Transverse colon (tissue), 4 donors: ENCODE measurements at regions of chr9 and their contacts with region 1.

Region 1: DNA sequence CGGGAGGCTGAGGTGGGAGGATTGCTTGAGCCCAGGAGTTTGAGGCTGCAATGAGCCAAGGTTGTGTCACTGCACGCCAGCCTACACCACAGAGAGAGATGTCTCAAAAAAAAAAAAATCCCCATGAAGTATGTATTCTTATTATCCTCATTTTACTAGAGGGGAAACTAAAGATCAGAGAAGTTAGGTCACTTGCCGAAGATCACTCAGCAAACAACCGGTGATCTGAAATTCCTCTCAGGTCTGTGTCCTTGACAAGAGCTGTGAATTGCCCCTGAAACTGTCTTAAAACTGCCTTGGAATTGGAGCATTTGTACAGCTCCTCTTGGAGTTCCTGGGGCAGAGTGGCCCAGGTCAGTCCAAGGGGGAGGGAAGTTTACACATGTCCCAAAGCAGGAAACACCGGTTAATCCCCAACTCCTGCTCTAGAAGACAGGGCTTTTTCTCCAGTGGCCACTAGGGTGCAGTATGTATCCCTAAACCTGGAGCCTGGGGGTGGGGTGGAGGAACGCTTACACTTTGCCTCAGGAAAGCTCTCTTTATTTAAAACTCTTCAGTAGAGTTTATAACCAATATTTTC is 27.6 kb downstream of the AQP7 start:
- DNase-seq: peak; percentile 80
- H3K4me3 ChIP-seq: no peak overlapping the region
- H3K27ac ChIP-seq: peak overlapping the region in 1 of 4 donors; percentile 44
- H3K4me1 ChIP-seq: peaks cover 0 to 9% (median 3%) of the 10 kb centered on the region in 4 donors
- H3K27me3 ChIP-seq: no peaks in the 10 kb centered on the region
- CTCF ChIP-seq: peak; percentile 85 to 91 (median 89)
- EP300 ChIP-seq: no peak
- POLR2A ChIP-seq: no peak

Region 2: GRCh38 chr9:33092634-33093033 is 282.1 kb before region 1 on chr9:
- in situ Hi-C with region 1: no loop called
- intact Hi-C with region 1: no loop called
- DNase-seq: no peak
- H3K4me3 ChIP-seq: no peak overlapping the region
- H3K27ac ChIP-seq: no peak overlapping the region
- H3K4me1 ChIP-seq: no peaks in the 10 kb centered on the region
- H3K27me3 ChIP-seq: no peaks in the 10 kb centered on the region
- CTCF ChIP-seq: no peak
- EP300 ChIP-seq: no peak
- POLR2A ChIP-seq: no peak

Region 3: DNA sequence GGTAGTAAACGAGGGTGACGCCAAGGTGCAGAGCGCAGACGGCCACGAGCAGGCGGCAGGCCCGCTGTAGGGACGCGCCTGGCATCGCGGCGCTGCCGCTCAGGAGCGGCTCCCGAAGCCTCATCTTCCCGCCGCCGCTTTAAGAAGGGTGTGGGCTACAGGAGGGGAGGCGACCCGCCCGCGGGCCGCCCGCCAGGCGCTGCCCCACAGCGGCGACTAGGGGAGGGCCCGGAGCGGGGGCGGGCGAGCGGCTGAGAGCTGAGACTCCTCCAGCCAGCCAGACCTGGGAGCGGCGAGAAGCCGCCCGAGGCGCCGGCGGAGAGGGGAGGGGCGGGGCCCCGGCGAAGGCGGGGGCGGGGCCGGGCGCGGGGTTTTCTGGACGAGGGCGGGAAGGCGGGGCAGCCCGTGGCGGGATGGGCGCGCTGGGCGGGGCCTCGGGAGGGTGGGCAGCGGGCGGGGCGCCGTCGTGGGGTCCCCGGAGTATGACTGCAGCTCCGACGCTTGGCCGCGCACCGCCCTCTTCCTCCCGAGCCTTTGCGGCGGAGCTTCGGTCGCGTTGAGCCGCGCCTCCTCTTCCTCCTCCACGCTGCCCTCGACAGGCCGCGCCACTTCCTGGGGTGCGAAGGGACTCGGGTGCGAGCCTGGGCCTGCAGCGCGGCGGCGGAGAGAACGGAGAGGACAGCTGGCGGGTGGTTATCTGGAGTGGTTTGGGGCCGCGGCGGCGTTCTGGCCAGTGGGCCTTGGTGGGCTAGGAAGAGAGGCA is 207.5 kb before region 1 on chr9 and contains the start of gene B4GALT1:
- in situ Hi-C with region 1: no loop called
- intact Hi-C with region 1: no loop called
- DNase-seq: peak; percentile 97
- H3K4me3 ChIP-seq: peak within 1 kb of the TSS; percentile 38 to 84 (median 72)
- H3K27ac ChIP-seq: peak within 1 kb of the TSS; percentile 93 to 97 (median 96)
- H3K4me1 ChIP-seq: peaks cover 22 to 49% (median 43%) of the 10 kb centered on the region in 4 donors
- H3K27me3 ChIP-seq: no peaks in the 10 kb centered on the region
- CTCF ChIP-seq: peak in 2 of 5 experiments; percentile 22 to 27
- EP300 ChIP-seq: no peak
- POLR2A ChIP-seq: peak; percentile 88
- total RNA-seq, gene B4GALT1: 23.7 to 126 (median 93.7) TPM

Region 4: DNA sequence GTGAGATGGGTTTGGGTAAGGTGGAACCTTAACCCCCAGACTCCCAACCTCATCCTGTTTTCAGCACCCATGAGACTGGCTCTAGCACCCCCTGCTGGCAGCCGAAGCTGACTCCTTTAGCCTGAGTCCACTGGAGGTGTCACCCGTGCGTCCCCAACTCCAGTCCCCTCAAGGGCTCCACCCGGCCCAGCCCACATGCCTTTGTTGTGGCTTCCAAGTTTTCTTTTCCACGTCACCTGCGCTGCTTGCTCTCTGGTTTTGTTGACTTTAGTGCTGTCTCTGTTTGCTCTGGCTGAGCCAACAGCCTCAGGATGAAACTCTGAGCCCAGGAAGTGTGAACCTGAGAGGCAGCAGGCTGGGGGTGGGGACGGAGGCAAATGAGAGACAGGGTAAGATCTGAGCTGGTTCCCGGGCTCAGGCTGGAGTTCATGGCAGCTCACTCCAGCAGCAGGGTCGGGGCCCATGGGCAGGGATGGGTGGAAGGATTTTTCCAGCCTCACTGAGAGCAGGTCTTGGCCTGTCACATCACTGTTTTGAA is 40.8 kb after region 1 on chr9:
- in situ Hi-C with region 1: no loop called
- intact Hi-C with region 1: loop called (anchors 5 kb)
- DNase-seq: peak; percentile 91
- H3K4me3 ChIP-seq: no peak overlapping the region
- H3K27ac ChIP-seq: peak overlapping the region in 3 of 4 donors; percentile 33 to 55 (median 54)
- H3K4me1 ChIP-seq: peaks cover 7 to 38% (median 21%) of the 10 kb centered on the region in 4 donors
- H3K27me3 ChIP-seq: no peaks in the 10 kb centered on the region
- CTCF ChIP-seq: peak; percentile 70 to 86 (median 77)
- EP300 ChIP-seq: no peak
- POLR2A ChIP-seq: no peak

Region 5: GRCh38 chr9:33466565-33467495 is 92.1 kb after region 1 on chr9:
- in situ Hi-C with region 1: loop called in 1 of 4 experiments (anchors 25 kb)
- intact Hi-C with region 1: loop called (anchors 10 kb)
- DNase-seq: peak; percentile 78
- H3K4me3 ChIP-seq: no peak overlapping the region
- H3K27ac ChIP-seq: no peak overlapping the region
- H3K4me1 ChIP-seq: peaks cover 0 to 2% (median 0%) of the 10 kb centered on the region in 4 donors
- H3K27me3 ChIP-seq: no peaks in the 10 kb centered on the region
- CTCF ChIP-seq: peak; percentile 95 to 98 (median 97)
- EP300 ChIP-seq: no peak
- POLR2A ChIP-seq: no peak

Region 6: DNA sequence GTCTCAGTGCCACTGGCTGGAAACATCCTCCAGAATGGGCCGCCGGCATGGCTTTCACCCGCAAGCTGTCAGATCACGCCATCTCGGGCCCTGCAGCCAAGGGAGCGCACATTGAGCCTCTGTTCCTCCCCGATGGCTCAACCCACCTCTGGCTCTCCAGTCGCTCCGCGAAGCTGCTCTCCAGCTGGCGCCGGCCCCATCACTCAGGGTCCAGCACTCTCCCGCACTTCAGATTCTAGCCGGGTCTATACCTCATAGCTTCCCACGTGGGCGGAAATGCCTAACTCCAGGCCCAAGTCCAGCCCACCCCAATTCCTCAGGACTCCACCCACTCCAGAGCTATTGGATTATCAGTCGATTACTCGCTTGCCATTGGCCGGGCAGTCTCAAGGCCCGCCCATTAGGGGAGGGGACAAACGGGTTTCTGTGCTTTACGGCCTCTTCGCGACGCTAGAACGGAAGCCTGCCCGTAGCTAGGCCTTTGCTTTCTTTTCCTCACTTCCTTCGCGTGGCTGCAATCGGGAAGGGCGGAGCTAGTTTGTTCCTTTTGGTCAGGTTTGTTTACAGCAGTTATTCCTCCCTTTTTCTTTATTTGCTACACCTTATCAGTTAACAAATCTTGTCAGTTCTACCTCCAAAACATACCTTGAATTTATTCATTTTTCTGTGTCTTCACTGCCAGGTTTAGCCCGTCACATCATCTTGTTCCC is 99.1 kb after region 1 on chr9 and contains the start of gene NOL6:
- in situ Hi-C with region 1: loop called in 1 of 4 experiments (anchors 25 kb)
- intact Hi-C with region 1: loop called (anchors 10 kb)
- DNase-seq: peak; percentile 98
- H3K4me3 ChIP-seq: peak within 1 kb of the TSS; percentile 57 to 94 (median 78)
- H3K27ac ChIP-seq: peak within 1 kb of the TSS; percentile 57 to 87 (median 82)
- H3K4me1 ChIP-seq: peaks cover 7 to 18% (median 15%) of the 10 kb centered on the region in 4 donors
- H3K27me3 ChIP-seq: no peaks in the 10 kb centered on the region
- CTCF ChIP-seq: no peak
- EP300 ChIP-seq: no peak
- POLR2A ChIP-seq: peak; percentile 76
- total RNA-seq, gene NOL6: 8.9 to 29.1 (median 12.7) TPM

Region 7: DNA sequence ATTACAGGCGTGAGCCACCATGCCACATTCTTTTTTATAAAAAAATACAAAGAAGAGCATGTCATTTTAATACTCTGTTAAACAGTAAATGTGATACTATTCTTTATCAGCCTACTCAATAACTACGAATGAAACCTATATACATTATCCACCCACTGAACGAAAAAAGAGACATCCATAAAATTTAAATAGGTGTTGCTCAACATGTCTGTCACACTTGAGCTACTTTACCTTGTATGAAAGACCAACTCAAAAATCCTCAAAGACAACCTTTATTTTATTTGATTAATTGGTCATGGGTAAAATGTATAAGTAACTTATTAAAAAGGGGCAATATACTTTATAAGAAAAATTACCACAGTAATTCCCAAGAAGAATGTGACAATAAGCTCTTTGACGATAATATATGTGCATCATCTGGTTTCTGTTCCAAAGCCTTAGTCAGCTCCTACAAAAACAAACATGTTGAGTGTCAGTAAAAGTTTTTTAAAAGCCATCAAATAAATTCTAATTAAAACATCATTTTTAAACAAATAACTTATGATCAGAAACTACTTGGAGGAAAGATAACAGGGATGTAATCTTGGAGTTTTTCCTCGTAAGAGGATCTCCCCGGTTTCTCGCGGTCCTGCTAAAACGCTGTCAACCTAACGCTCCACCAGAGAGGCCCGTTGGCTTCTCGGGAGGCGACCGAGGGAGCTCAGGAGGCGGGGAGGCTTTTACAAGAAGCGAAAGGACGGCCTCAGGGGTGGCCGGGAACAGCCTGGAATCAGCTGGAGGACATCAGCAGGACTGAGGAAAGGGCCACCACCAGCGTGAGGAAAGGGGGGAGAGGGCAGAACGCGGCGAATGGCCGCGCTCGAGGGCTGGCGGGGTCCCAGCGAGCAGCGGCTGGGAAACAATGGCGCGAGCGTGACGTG is 135.8 kb after region 1 on chr9:
- in situ Hi-C with region 1: loop called in 1 of 4 experiments (anchors 25 kb)
- intact Hi-C with region 1: no loop called
- DNase-seq: peak; percentile 39
- H3K4me3 ChIP-seq: peak overlapping the region; percentile 60 to 62 (median 60)
- H3K27ac ChIP-seq: peak overlapping the region; percentile 73 to 84 (median 80)
- H3K4me1 ChIP-seq: peaks cover 0 to 8% (median 2%) of the 10 kb centered on the region in 4 donors
- H3K27me3 ChIP-seq: no peaks in the 10 kb centered on the region
- CTCF ChIP-seq: no peak
- EP300 ChIP-seq: no peak
- POLR2A ChIP-seq: no peak

Region 8: DNA sequence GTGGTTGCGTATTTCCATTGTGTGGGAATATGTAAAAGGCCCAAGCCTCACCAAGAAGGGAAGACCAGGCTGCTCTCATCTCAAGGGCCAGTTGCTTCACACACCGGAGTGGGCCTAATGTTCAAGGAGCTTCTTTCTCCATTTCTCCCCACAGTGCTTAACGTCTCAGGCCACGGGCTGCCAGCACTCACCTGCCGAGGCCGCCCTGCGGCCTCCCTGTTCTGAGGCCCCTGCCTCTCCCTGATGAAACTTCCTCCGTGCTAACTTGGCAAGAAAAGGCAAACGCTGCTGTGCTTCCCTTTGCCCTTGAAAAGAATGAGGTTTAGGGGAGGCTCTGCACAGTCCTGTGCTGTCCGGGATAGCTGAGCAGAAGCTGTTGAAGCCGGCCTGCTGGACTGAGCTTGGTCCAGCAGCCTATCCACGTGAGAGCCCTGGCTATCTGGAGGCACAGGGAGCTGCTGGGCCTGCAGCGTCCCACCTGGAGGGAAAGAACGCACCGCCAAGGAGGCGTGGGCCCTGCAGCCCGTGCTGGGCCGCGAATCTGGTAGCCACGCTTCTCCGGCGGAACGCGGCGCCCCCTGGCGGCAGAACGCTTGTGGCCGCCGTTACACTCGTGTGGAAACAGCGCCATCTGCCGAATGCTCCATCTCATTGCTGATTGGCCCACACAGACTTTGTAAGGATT is 347.1 kb after region 1 on chr9:
- in situ Hi-C with region 1: no loop called
- intact Hi-C with region 1: loop called (anchors 5 kb)
- DNase-seq: peak; percentile 90
- H3K4me3 ChIP-seq: no peak overlapping the region
- H3K27ac ChIP-seq: no peak overlapping the region
- H3K4me1 ChIP-seq: peaks cover 0 to 4% (median 1%) of the 10 kb centered on the region in 4 donors
- H3K27me3 ChIP-seq: peaks cover 11% of the 10 kb centered on the region
- CTCF ChIP-seq: peak; percentile 99 to 100 (median 100)
- EP300 ChIP-seq: no peak
- POLR2A ChIP-seq: no peak